Right ventricle myocardium superior (tissue), 1 donor: ENCODE measurements at regions of chr7 and their contacts with region 1.

Region 1: GRCh38 chr7:23055582-23056178 is 41.8 kb upstream of the HYCC1 start:
- DNase-seq: no peak
- ATAC-seq: peak; percentile 86

Region 2: GRCh38 chr7:22559829-22560489 is 495.7 kb before region 1 on chr7:
- intact Hi-C with region 1: loop called (anchors 5 kb)
- DNase-seq: peak; percentile 71
- ATAC-seq: peak; percentile 79

Region 3: DNA sequence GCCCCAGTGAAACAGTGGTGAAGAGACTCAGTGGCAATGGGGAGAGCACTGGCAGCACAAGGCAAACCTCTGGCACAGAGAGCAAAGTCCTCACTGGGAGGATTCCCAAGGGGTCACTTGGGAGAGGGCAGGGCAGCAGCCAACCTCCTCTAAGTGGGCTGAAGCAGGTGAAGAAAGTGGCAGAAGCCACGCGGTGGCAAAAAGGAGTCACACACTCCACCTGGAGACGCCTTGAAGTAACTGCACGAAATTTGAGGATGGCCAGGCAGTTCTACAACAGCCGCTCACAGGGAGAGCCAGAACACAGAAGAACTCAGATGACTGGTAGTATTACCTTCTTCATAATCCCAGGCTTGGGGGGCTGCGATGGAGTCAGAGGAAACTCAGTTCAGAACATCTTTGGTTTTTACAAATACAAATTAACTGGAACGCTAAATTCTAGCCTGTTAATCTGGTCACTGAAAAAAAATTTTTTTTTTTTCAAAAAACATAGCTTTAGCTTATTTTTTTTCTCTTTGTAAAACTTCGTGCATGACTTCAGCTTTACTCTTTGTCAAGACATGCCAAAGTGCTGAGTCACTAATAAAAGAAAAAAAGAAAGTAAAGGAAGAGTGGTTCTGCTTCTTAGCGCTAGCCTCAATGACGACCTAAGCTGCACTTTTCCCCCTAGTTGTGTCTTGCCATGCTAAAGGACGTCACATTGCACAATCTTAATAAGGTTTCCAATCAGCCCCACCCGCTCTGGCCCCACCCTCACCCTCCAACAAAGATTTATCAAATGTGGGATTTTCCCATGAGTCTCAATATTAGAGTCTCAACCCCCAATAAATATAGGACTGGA is 329.1 kb before region 1 on chr7:
- intact Hi-C with region 1: loop called (anchors 10 kb)
- DNase-seq: peak; percentile 44
- ATAC-seq: peak; percentile 54

Region 4: GRCh38 chr7:22822486-22823141 is 233.1 kb before region 1 on chr7 and contains the start of gene TOMM7:
- intact Hi-C with region 1: loop called (anchors 10 kb)
- DNase-seq: peak; percentile 94
- ATAC-seq: peak; percentile 98
- total RNA-seq, gene TOMM7: 634 TPM

Region 5: DNA sequence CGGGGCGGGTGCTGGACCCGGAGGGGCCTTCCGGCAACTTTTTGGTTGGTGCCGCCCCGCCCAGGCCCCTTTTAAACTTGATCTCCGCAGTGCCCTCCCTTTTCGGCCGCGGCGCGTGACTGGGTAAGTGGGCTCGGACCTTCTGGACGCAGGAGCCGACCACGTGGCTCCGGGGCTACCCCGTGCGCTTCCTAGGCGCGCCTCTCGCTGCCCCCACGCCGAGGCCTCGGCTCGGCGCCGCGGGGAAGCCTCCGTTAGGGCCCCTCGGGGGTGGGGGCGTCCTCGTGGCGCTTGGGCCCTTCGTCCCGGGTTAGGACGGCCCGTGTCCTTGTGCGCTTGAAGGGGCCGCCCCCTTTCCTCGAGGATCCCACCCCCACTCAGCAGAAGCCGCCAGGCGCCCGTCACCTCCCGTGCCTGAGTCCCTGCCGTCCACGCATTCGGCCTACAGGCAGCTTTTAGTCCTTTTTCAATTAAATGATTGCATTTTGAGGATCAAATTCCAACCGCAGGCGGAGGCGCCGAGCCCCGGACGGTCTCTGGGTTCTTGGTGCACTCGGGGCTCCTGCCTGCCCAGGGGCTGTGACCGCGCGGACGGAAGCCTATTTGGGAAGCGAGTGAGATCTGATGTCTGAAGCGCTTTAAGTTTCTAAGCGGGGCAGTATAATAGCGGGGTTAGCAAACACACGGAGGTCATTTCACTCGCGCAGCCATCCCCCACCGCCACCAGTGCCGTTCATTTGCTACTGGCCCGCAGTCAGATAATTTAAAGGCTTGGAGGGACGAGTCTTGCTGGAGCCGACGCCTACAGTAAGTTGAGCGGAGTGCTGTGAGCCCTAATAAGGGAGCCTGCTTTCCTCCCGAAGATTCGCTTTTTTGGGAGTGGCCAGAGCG is 201.3 kb before region 1 on chr7:
- intact Hi-C with region 1: loop called (anchors 5 kb)
- DNase-seq: peak; percentile 95
- ATAC-seq: peak; percentile 96